Activated B cell treated with CpG ODN at 0.5 μM for 24 hours (primary cell): ENCODE measurements at regions of chr1 and their contacts with region 1.

Region 1: DNA sequence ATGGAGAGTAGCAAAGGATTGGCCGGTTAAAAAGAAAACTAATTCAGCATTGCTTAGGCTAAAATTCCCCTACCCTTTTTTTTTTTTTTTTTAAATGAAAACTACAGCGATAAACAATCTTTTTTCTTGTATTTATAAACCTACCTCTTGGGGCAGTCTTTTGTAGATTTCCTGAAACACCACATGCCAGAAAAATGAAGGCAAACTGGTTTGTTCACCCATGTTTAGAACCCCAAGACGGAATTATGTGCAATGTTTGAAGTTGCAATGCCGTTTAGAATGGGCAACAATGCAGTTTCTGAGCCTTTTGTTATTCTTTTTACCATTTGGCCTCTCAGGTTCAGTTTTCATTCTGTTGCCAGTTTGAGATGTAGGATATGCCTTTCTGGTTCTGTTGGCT is 59.1 kb downstream of the PRDM2 start:
- DNase-seq: no peak
- ATAC-seq: no peak
- H3K4me3 Mint-ChIP-seq: no peak overlapping the region
- H3K27ac Mint-ChIP-seq: no peak overlapping the region
- H3K4me1 Mint-ChIP-seq: peaks cover 90% of the 10 kb centered on the region
- H3K27me3 Mint-ChIP-seq: no peaks in the 10 kb centered on the region
- CTCF ChIP-seq: no peak

Region 2: GRCh38 chr1:13807213-13807612 is 48.1 kb after region 1 on chr1:
- CTCF ChIA-PET with region 1: no interaction called
- POLR2A ChIA-PET with region 1: interaction called, 13 read pairs
- intact Hi-C with region 1: no loop called
- DNase-seq: no peak
- ATAC-seq: peak; percentile 43
- H3K4me3 Mint-ChIP-seq: no peak overlapping the region
- H3K27ac Mint-ChIP-seq: no peak overlapping the region
- H3K4me1 Mint-ChIP-seq: peaks cover 57% of the 10 kb centered on the region
- H3K27me3 Mint-ChIP-seq: no peaks in the 10 kb centered on the region
- CTCF ChIP-seq: no peak

Region 3: GRCh38 chr1:14713086-14713485 is 954.0 kb after region 1 on chr1:
- CTCF ChIA-PET with region 1: no interaction called
- POLR2A ChIA-PET with region 1: no interaction called
- intact Hi-C with region 1: no loop called
- DNase-seq: no peak
- ATAC-seq: no peak
- H3K4me3 Mint-ChIP-seq: no peak overlapping the region
- H3K27ac Mint-ChIP-seq: no peak overlapping the region
- H3K4me1 Mint-ChIP-seq: no peaks in the 10 kb centered on the region
- H3K27me3 Mint-ChIP-seq: no peaks in the 10 kb centered on the region
- CTCF ChIP-seq: no peak